ENCODE measurements at regions of chr15 and their contacts with region 1.

Region 1: GRCh38 chr15:77024271-77025082 is 29.6 kb downstream of the PSTPIP1 start:
- DNase-seq: peak; percentile 73 to 87 (median 84)
- ATAC-seq: peak; percentile 80
- H3K4me3 ChIP-seq: no peak overlapping the region
- H3K27ac ChIP-seq: no peak overlapping the region
- H3K4me1 ChIP-seq: peaks cover 0 to 32% of the 10 kb centered on the region in 2 experiments; a peak in 2 of 5 replicates
- H3K27me3 ChIP-seq: peaks cover 0 to 36% of the 10 kb centered on the region in 2 experiments; a peak in 3 of 5 replicates
- CTCF ChIP-seq: peak; percentile 82 to 94 (median 90)
- EP300 ChIP-seq: no peak
- POLR2A ChIP-seq: no peak
- RAD21 ChIP-seq: peak; percentile 72 to 83

Region 2: DNA sequence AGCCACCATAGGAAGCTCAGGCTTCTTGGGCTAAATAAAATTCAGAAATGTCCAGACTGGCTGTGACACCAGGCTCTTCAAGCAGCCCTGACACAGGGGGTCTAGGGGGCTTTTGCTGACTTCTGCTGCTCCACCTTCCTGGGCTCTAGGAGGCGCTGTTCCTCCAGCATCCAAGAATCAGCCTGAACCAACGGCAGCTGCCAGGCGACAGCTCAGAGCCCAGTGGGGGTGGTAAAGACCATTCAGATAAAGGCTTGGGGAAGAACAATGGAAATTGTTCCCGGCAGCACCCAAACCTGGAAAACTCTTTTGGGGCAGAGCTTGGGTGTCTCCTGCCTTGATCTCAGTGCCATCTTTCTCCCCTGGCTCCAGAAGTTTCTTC is 51.1 kb before region 1 on chr15:
- CTCF ChIA-PET with region 1: no interaction called
- POLR2A ChIA-PET with region 1: no interaction called
- in situ Hi-C with region 1: no loop called
- intact Hi-C with region 1: loop called (anchors 5 kb)
- DNase-seq: peak; percentile 24 to 46 (median 36)
- ATAC-seq: peak; percentile 82
- H3K4me3 ChIP-seq: no peak overlapping the region
- H3K27ac ChIP-seq: no peak overlapping the region
- H3K4me1 ChIP-seq: peaks cover 0 to 3% of the 10 kb centered on the region in 2 experiments; a peak in 1 of 5 replicates
- H3K27me3 ChIP-seq: peaks cover 3 to 30% of the 10 kb centered on the region in 2 experiments; a peak in 4 of 5 replicates
- CTCF ChIP-seq: peak; percentile 63 to 83 (median 64)
- EP300 ChIP-seq: no peak
- POLR2A ChIP-seq: no peak
- RAD21 ChIP-seq: peak; percentile 17 to 68; a peak in 2 of 4 replicates

Region 3: GRCh38 chr15:77107531-77108355 is 83.3 kb after region 1 on chr15:
- CTCF ChIA-PET with region 1: no interaction called
- POLR2A ChIA-PET with region 1: interaction called, 3 read pairs
- in situ Hi-C with region 1: no loop called
- intact Hi-C with region 1: loop called (anchors 5 kb)
- DNase-seq: peak; percentile 37 to 52 (median 47)
- ATAC-seq: peak; percentile 91
- H3K4me3 ChIP-seq: no peak overlapping the region
- H3K27ac ChIP-seq: no peak overlapping the region
- H3K4me1 ChIP-seq: no peaks in the 10 kb centered on the region
- H3K27me3 ChIP-seq: no peaks in the 10 kb centered on the region
- CTCF ChIP-seq: peak; percentile 67 to 74 (median 70)
- EP300 ChIP-seq: no peak
- POLR2A ChIP-seq: no peak
- RAD21 ChIP-seq: peak; percentile 50 to 82; a peak in 3 of 4 replicates

Region 4: GRCh38 chr15:77496710-77497103 is 472.2 kb after region 1 on chr15:
- CTCF ChIA-PET with region 1: interaction called, 3 read pairs
- POLR2A ChIA-PET with region 1: no interaction called
- in situ Hi-C with region 1: loop called (anchors 10 kb)
- intact Hi-C with region 1: loop called (anchors 10 kb)
- DNase-seq: peak; percentile 79 to 85 (median 80)
- ATAC-seq: peak; percentile 97
- H3K4me3 ChIP-seq: no peak overlapping the region
- H3K27ac ChIP-seq: no peak overlapping the region
- H3K4me1 ChIP-seq: peaks cover 4 to 18% of the 10 kb centered on the region in 2 experiments
- H3K27me3 ChIP-seq: no peaks in the 10 kb centered on the region
- CTCF ChIP-seq: peak; percentile 92 to 95 (median 93)
- EP300 ChIP-seq: no peak
- POLR2A ChIP-seq: no peak
- RAD21 ChIP-seq: peak; percentile 86 to 96

Region 5: GRCh38 chr15:77543159-77543882 is 518.8 kb after region 1 on chr15:
- CTCF ChIA-PET with region 1: interaction called, 9 read pairs
- POLR2A ChIA-PET with region 1: interaction called, 3 read pairs
- in situ Hi-C with region 1: loop called (anchors 5 kb)
- intact Hi-C with region 1: loop called (anchors 5 kb)
- DNase-seq: peak; percentile 89 to 95 (median 94)
- ATAC-seq: peak; percentile 96
- H3K4me3 ChIP-seq: peak overlapping the region; percentile 42
- H3K27ac ChIP-seq: no peak overlapping the region
- H3K4me1 ChIP-seq: peaks cover 0 to 24% of the 10 kb centered on the region in 2 experiments; a peak in 4 of 5 replicates
- H3K27me3 ChIP-seq: no peaks in the 10 kb centered on the region
- CTCF ChIP-seq: peak; percentile 97 to 99 (median 97)
- EP300 ChIP-seq: no peak
- POLR2A ChIP-seq: peak; percentile 56; the same call in 1 of the 2 replicates
- RAD21 ChIP-seq: peak; percentile 95 to 96